ENCODE measurements at regions of chr11 and their contacts with region 1.

Region 1: DNA sequence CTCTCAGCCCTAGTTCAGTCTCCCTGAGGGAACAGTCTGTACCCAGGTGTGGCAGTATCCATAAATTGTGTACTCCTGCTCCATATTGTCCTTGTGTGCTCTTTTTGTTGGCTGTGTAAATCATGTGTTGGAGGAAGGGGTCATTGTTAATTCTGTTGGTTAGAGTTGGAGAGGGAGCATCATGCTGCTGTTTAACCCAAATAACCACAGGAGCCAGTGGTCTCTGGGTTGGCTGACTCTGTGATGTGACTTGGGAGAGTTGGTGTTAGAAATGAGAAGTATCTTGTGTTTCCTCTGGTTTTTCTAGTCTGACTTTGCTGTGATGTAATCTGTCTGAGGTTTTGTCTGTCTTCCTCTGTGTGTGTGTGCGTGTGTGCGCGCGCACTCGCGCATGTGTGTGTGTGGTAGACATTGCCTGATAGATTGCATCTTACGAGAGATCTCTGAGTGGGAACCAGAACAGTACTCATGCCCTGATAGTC is 30.5 kb downstream of the CTNND1 start:
- DNase-seq: no peak
- H3K4me3 ChIP-seq: no peak overlapping the region
- H3K27ac ChIP-seq: no peak overlapping the region
- H3K4me1 ChIP-seq: peaks cover 0 to 9% (median 3%) of the 10 kb centered on the region in 4 experiments; a peak in 3 of 7 replicates
- H3K27me3 ChIP-seq: no peaks in the 10 kb centered on the region
- CTCF ChIP-seq: no peak
- EP300 ChIP-seq: no peak
- POLR2A ChIP-seq: no peak
- RAD21 ChIP-seq: no peak

Region 2: GRCh38 chr11:57761301-57762234 is 30.5 kb before region 1 on chr11 and contains the start of gene CTNND1:
- CTCF ChIA-PET with region 1: interaction called, 6 read pairs
- POLR2A ChIA-PET with region 1: interaction called, 48 read pairs
- DNase-seq: peak; percentile 71 to 84
- H3K4me3 ChIP-seq: peak within 1 kb of the TSS; percentile 88 to 97 (median 91)
- H3K27ac ChIP-seq: peak within 1 kb of the TSS; percentile 93
- H3K4me1 ChIP-seq: peaks cover 0 to 10% (median 2%) of the 10 kb centered on the region in 4 experiments; a peak in 1 of 7 replicates
- H3K27me3 ChIP-seq: no peaks in the 10 kb centered on the region
- CTCF ChIP-seq: no peak
- EP300 ChIP-seq: no peak; a peak in 1 of 3 replicates
- POLR2A ChIP-seq: peak; percentile 84 to 91
- RAD21 ChIP-seq: peak; percentile 3; a peak in 1 of 4 replicates
- total RNA-seq, gene CTNND1: 164 and 167 TPM in 2 replicates